ENCODE measurements at regions of chr1 and their contacts with region 1.

Region 1: DNA sequence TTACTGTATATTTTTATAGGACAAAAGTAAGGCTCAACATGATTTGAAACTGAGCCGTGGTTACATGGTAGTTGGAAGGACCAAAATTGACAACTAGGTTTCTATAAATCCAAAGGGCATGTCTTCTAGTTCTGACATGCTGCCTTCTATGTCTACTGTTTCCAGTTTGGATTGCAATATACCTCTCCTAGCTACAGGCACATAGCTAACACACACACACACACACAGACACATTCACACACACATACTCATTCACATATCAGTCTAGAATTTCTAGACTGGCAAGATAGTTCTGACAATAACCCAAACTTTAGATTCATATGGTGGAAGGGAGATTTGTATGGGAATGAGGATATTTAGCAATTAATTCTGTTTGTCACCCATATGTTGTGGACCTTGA is 544.8 kb upstream of the CAMK1G start:
- DNase-seq: peak; percentile 49
- H3K4me3 Mint-ChIP-seq: no peak overlapping the region
- H3K27ac Mint-ChIP-seq: peak overlapping the region; percentile 1
- H3K4me1 Mint-ChIP-seq: peaks cover 21% of the 10 kb centered on the region
- H3K27me3 Mint-ChIP-seq: no peaks in the 10 kb centered on the region
- CTCF ChIP-seq: no peak

Region 2: GRCh38 chr1:208820580-208821212 is 218.0 kb before region 1 on chr1:
- CTCF ChIA-PET with region 1: no interaction called
- POLR2A ChIA-PET with region 1: no interaction called
- intact Hi-C with region 1: no loop called
- DNase-seq: no peak
- H3K4me3 Mint-ChIP-seq: no peak overlapping the region
- H3K27ac Mint-ChIP-seq: no peak overlapping the region
- H3K4me1 Mint-ChIP-seq: no peaks in the 10 kb centered on the region
- H3K27me3 Mint-ChIP-seq: no peaks in the 10 kb centered on the region
- CTCF ChIP-seq: no peak

Region 3: DNA sequence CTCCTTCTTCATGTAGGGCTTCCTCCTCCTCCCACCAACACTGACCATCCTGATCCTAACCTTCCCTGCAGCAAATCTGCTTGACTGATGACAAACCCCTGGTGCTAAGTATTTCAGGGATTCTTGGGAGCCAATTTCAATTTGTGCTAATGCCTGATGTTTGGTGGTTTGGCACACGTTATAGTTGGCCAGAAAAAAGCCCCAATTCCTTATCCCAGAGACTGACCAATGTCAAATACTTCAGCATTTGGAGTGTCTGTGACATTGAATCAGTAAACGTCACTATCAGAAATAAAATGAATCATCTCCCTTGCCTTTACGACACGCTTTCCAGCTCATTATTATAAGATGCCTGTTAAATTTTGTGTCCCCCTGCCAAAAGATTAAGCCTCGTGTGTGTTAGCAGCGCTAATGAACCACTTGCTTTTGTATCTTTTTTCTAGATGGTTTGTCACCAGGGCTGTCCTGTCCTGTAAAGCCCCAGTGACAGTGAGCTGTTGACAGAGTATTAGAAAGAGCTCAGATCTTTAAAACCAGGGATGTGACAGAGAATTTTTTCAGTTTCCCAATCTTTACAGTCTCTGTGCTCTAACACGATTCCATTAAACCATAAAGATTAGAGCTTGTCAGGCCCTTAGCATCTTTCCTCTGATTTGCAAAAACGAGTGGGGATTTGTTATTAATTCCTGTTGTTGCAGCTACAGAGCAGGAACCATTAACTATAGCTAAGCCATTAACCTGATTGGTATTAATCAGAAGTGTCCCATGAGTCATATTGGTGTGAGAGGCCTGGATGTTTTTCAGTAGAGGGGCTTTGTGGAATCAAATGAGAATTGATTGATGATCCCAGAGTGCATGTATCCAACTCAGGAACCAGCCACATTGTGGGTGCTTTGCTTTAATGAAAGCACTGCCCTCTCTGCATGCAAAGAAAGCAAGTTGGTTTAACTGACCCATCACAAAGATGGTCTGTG is 129.4 kb before region 1 on chr1:
- CTCF ChIA-PET with region 1: no interaction called
- POLR2A ChIA-PET with region 1: no interaction called
- intact Hi-C with region 1: no loop called
- DNase-seq: no peak
- H3K4me3 Mint-ChIP-seq: no peak overlapping the region
- H3K27ac Mint-ChIP-seq: no peak overlapping the region
- H3K4me1 Mint-ChIP-seq: no peaks in the 10 kb centered on the region
- H3K27me3 Mint-ChIP-seq: no peaks in the 10 kb centered on the region
- CTCF ChIP-seq: no peak

Region 4: GRCh38 chr1:208977638-208978256 is 61.0 kb before region 1 on chr1:
- CTCF ChIA-PET with region 1: no interaction called
- POLR2A ChIA-PET with region 1: interaction called, 5 read pairs
- intact Hi-C with region 1: loop called (anchors 1 kb)
- DNase-seq: peak; percentile 82
- H3K4me3 Mint-ChIP-seq: no peak overlapping the region
- H3K27ac Mint-ChIP-seq: peak overlapping the region; percentile 91
- H3K4me1 Mint-ChIP-seq: peaks cover 48% of the 10 kb centered on the region
- H3K27me3 Mint-ChIP-seq: no peaks in the 10 kb centered on the region
- CTCF ChIP-seq: no peak

Region 5: GRCh38 chr1:209048941-209049669 is 10.4 kb after region 1 on chr1:
- CTCF ChIA-PET with region 1: interaction called, 3 read pairs
- POLR2A ChIA-PET with region 1: interaction called, 12 read pairs
- intact Hi-C with region 1: no loop called
- DNase-seq: no peak
- H3K4me3 Mint-ChIP-seq: no peak overlapping the region
- H3K27ac Mint-ChIP-seq: no peak overlapping the region
- H3K4me1 Mint-ChIP-seq: peaks cover 21% of the 10 kb centered on the region
- H3K27me3 Mint-ChIP-seq: no peaks in the 10 kb centered on the region
- CTCF ChIP-seq: no peak

Region 6: DNA sequence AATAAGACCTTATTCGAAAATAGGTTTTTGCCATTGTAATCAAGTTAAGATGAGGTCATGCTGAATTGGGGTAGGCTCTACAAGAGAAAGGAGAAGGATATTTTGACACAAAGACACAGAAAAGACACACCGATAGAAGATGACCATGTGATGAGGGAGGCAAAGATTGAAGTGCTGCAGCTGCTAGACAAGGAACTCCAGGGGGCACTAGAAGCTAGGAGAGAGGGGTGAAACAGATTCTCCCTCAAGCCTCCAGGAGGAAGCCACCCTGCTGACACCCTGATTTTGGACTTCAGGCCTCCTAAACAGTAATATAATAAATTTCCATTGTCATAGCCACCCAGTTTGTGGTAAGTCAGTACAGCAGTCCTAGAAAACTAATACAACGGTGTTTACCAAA is 38.0 kb after region 1 on chr1:
- CTCF ChIA-PET with region 1: no interaction called
- POLR2A ChIA-PET with region 1: no interaction called
- intact Hi-C with region 1: no loop called
- DNase-seq: peak; percentile 84
- H3K4me3 Mint-ChIP-seq: no peak overlapping the region
- H3K27ac Mint-ChIP-seq: no peak overlapping the region
- H3K4me1 Mint-ChIP-seq: peaks cover 15% of the 10 kb centered on the region
- H3K27me3 Mint-ChIP-seq: no peaks in the 10 kb centered on the region
- CTCF ChIP-seq: peak; percentile 68

Region 7: GRCh38 chr1:209095627-209096595 is 57.2 kb after region 1 on chr1:
- CTCF ChIA-PET with region 1: no interaction called
- POLR2A ChIA-PET with region 1: no interaction called
- intact Hi-C with region 1: loop called (anchors 2 kb)
- DNase-seq: peak; percentile 92
- H3K4me3 Mint-ChIP-seq: no peak overlapping the region
- H3K27ac Mint-ChIP-seq: no peak overlapping the region
- H3K4me1 Mint-ChIP-seq: peaks cover 21% of the 10 kb centered on the region
- H3K27me3 Mint-ChIP-seq: no peaks in the 10 kb centered on the region
- CTCF ChIP-seq: no peak

Measured in MCF 10A (cell line).